GM18951 (cell line): ENCODE measurements at regions of chr19 and their contacts with region 1.

Region 1: DNA sequence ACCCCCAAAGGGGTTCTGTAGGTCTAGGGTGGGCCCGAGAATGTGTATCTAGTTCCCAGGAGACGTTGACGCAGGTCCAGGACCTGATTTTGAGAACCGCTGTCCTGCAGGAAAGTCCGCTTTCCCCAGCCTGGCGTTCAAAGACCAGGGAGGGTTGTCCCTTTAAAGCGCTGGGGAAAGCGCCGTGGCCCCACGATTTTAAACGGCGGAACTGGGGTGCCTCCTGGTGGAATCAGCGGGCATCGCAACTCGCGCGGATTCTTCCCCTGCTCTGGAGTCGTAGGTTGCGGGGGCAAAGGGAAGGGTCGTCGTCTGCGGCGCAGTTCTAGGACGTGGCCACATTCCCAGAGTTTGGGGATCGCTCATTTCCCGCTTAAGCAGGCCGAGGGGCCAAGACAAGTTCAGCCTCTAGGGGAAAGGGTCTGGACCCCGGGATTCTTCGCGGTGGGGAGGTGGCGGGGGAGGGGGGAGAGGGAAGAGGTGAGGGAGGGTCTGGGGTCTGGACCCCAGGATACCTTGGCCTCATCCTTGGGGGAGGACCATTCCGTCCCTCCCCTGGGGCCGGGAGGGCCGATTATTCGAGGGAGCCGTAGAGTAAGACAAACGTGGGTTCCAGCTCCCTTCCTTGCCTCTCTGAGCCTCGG is 7.7 kb downstream of the PNMA8B start:
- POLR2A ChIP-seq: no peak

Region 2: GRCh38 chr19:46283771-46284170 is 204.2 kb before region 1 on chr19:
- in situ Hi-C with region 1: loop called (anchors 5 kb)
- POLR2A ChIP-seq: no peak

Region 3: GRCh38 chr19:46404753-46405468 is 83.0 kb before region 1 on chr19:
- in situ Hi-C with region 1: loop called (anchors 5 kb)
- POLR2A ChIP-seq: no peak

Region 4: DNA sequence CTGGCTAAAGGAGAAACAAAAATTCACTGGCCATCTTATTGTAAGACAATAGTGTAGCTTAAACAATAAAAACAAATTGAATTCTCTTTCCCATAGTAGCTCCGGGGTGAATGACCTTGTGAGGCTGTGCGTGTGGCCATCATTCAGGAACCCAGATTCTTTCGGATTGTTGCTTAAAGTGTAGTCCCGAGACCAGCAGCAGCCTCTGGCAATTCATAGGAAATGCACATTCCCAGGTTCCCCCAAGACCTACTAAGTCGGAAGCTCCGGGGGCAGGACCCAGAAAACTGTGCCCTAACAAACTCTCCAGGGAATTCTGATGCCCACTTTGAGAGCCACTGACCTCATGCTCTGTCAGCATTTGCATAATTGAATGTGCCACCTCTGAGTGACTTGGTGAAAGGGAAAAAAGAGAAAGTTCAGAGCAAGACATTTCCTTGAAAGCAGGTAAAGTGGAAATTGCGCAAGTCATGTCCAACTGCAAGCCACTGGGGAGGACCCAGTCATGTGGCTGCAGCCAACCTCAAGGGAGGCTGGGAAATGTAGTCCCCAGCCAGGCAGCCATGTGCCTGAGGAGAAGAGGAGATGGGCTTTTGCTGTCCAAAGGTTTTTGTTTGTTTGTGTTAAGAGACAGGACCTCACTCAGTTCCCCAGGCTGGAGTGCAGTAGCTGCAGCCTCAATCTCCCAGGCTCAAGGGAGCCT is 58.4 kb after region 1 on chr19:
- in situ Hi-C with region 1: no loop called
- POLR2A ChIP-seq: no peak